GM10248 (cell line): ENCODE measurements at regions of chr4 and their contacts with region 1.

Region 1: DNA sequence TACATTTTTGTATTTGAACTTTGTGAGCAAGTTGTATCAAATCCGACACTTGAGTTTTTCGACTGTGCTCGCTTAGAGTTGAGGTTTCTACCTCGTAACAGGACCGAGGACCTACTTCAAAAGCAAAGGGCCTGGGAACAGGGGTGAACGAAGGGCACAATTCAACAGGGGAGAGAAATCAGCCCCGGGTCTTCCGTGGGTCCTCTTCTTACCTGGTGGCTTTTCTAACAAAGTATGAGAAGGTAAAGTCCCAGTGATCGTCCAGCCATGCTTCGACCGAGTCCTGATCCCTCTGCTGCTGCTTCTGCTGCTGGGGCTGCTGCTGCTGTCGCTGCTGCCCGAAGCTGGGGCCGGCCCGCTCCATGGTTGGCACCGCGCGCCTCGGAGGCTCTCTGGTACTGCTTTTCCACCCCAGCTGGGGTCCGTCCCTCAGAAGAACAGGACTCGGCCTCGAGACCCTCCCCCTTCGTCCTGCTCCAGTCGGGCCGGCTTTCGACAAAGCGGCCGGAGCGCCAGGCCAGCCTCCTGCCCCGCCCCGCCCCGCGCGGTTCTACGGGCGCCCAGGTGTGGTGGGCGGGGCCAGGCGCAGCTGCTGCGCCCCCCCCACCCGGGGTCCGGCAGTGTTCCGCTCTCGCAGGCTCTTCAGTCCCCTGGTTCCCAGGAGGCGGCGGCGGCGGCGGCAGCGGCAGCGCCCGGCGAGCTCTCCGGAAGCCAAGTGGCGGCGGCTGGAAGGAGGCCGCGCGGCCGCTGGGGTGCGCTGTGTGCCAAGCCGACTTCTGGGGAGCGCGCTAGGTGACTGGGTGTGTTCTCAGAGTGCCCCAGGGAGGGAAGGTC is at the start of gene PDE5A:
- DNase-seq: peak; percentile 81
- CTCF ChIP-seq: peak; percentile 90

Region 2: DNA sequence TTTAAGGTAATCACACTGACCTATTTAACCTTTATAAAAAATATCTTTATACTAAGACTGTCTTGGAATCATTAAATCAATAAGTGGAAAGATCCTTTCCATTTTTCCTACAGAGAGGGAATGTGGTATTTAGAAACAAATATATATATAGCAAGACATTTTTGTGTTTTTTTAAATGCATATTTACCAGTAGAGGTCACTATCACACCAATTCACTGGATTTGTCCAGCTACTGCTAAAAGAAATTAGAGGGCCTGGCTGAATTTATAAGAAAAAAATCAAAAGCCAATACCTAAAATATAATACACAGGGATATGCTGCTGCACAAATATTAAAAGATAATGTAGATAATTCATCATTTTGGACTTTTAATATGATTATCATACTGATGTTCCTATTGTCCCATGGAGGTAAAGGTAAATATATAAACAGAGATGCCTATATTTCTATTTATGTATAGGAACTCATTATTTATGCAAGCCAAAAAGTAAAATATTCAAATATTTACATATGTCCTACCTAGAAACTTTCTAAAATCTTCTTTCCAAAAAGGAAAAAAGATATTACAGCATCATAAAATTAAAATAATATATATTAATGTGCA is 69.4 kb before region 1 on chr4:
- CTCF ChIA-PET with region 1: interaction called, 30 read pairs
- POLR2A ChIA-PET with region 1: no interaction called
- DNase-seq: peak; percentile 29
- CTCF ChIP-seq: peak; percentile 17

Region 3: GRCh38 chr4:119615068-119615719 is 13.3 kb before region 1 on chr4:
- CTCF ChIA-PET with region 1: interaction called, 15 read pairs
- POLR2A ChIA-PET with region 1: no interaction called
- DNase-seq: no peak
- CTCF ChIP-seq: no peak

Region 4: DNA sequence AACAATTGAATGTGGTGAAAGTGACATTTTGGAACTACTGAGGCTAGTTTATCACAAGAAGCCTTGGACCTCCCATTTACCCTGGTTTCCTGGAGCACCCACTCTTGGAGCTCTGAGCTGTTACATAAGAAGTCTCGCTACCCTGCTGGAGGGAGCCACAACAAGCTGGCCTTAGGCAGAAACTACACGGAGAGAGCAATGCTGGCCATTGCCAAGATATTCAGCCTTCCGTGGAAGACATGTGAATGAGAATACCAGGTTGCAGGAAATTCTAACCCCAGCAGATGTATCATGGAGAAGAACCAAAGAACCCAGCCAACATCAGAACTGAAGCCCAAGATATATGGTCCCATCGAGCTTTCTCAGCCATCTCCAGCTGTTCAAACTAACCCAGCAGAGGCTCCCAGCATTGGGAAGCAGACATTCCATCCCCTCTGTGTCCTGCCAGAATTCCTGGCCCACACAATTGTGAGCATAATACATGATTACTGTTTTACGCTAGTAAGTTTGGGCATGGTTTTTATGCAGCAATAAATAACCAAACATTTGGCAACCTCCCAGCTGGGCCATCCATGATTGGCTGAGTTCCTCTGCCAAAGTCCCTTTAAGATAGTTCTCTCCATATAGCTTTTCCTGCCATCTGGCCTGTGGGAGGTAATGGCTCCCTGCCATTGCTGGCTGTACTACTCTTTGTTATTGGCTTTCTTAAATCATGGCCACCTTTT is 18.0 kb after region 1 on chr4:
- CTCF ChIA-PET with region 1: interaction called, 25 read pairs
- POLR2A ChIA-PET with region 1: no interaction called
- DNase-seq: no peak
- CTCF ChIP-seq: no peak

Region 5: GRCh38 chr4:119652998-119653397 is 24.5 kb after region 1 on chr4:
- CTCF ChIA-PET with region 1: interaction called, 11 read pairs
- POLR2A ChIA-PET with region 1: no interaction called
- DNase-seq: no peak
- CTCF ChIP-seq: no peak

Region 6: GRCh38 chr4:120049732-120050494 is 421.4 kb after region 1 on chr4:
- CTCF ChIA-PET with region 1: interaction called, 87 read pairs
- POLR2A ChIA-PET with region 1: no interaction called
- DNase-seq: peak; percentile 51
- CTCF ChIP-seq: peak; percentile 88

Region 7: GRCh38 chr4:120056246-120056645 is 427.7 kb after region 1 on chr4:
- CTCF ChIA-PET with region 1: interaction called, 87 read pairs
- POLR2A ChIA-PET with region 1: no interaction called
- DNase-seq: no peak
- CTCF ChIP-seq: peak; percentile 9